ENCODE measurements at regions of chr20 and their contacts with region 1.

Region 1: DNA sequence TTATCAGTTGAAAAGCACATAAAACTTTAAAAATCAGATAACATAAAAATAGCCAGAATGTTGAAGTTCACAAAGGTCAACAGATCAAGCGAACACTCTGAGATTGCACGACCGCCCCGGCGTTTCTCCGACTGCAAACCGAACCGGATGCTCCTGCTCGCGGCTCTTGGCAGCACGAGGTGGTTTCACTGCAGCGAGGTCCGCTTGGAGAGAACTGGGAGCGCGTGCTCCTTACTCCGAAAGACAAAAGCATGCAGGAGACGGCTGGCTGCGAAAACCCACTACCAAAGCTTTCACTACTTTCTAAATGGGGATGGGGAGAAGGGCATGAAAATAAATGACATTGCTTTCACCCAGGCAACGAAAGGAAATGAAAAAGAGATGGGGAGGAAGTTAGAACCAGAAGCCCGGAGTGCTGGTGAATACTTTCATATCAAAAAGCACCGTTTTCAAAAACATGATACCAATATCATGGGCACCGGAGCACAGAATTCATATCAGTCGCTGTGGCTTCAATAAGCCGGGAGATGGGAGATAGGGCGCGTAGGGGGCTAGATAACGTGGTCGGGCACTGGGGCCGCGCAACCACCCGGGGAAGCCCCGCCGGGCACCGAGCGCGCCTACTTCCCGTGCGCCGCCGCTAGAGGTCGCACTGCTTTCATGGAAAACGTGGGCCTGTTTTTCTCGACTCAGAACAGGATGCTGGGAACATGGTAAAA is 8.3 kb upstream of the ANKRD60 start:
- DNase-seq: peak; percentile 93
- ATAC-seq: peak; percentile 90
- H3K4me3 Mint-ChIP-seq: peak overlapping the region; percentile 81
- H3K27ac Mint-ChIP-seq: peak overlapping the region; percentile 92
- H3K4me1 Mint-ChIP-seq: peaks cover 32% of the 10 kb centered on the region
- H3K27me3 Mint-ChIP-seq: no peaks in the 10 kb centered on the region

Region 2: GRCh38 chr20:58264274-58264673 is 27.5 kb after region 1 on chr20:
- CTCF ChIA-PET with region 1: no interaction called
- POLR2A ChIA-PET with region 1: no interaction called
- intact Hi-C with region 1: no loop called
- DNase-seq: no peak
- ATAC-seq: no peak
- H3K4me3 Mint-ChIP-seq: no peak overlapping the region
- H3K27ac Mint-ChIP-seq: no peak overlapping the region
- H3K4me1 Mint-ChIP-seq: peaks cover 22% of the 10 kb centered on the region
- H3K27me3 Mint-ChIP-seq: no peaks in the 10 kb centered on the region

Region 3: DNA sequence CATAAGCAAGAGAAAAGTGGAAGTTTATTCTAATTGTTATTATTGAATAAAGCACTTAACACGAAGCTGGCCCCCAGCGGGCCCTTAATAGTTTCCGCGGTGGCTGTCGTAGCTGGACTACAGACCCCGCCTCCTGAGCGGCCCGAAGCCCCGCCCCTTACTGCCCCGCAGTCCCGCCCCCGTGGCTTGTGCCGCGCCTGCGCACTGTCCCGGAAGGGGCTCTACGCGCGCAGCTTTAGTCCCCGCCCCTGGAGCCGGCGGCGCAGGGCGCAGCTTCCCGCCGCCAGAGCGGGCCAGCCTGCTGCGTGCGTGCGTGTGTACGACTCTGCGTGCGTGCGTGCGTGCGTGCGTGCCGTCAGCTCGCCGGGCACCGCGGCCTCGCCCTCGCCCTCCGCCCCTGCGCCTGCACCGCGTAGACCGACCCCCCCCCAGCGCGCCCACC is 152.1 kb after region 1 on chr20 and contains the start of gene VAPB:
- CTCF ChIA-PET with region 1: interaction called, 14 read pairs
- POLR2A ChIA-PET with region 1: no interaction called
- intact Hi-C with region 1: loop called (anchors 1 to 2 kb)
- DNase-seq: peak; percentile 98
- ATAC-seq: peak; percentile 99
- H3K4me3 Mint-ChIP-seq: peak within 1 kb of the TSS; percentile 100
- H3K27ac Mint-ChIP-seq: peak within 1 kb of the TSS; percentile 97
- H3K4me1 Mint-ChIP-seq: peaks cover 39% of the 10 kb centered on the region
- H3K27me3 Mint-ChIP-seq: peaks cover 2% of the 10 kb centered on the region
- total RNA-seq, gene VAPB: 43.9 to 54.5 TPM

Region 4: DNA sequence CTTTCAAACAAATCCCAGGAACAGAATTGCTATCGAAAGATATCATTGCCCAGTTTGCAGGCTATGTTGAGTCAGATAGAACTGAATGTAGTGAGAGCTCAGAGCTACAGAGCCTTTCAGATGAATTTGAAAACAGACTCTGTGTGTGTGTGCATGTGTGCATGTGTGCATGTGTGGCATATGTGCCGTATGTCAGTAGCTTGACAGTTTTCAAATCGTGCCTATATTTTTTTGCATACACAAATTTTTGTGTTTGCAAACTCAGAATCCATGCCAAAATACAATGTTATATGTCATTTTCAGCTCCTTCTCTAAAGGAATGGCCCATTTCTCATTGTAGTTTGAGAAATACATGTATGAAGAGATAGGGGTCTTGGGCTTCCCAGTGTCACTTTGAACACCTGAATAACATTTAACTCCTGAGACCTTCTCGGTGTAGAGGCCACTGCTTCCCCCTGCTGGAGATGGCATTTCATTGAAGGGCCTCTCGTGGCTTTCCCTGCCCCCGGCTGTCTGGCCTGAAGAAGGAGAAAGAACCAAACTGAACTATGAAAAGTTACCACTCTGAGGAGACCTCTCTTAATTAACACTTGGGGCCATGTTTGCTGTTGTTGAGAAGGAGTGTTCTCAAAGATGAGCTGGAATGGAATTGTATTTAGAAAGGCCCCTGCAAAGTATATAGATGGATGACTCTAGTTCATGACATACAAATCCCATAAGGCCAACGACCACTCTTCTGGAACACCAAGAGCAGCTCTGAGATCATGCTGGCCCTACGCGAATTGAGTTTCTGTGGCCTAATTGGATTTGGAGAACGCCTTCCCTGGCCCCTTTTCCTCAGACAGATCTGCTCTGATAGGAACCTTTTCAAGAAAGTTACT is 211.0 kb after region 1 on chr20:
- CTCF ChIA-PET with region 1: interaction called, 9 read pairs
- POLR2A ChIA-PET with region 1: no interaction called
- intact Hi-C with region 1: loop called (anchors 1 to 2 kb)
- DNase-seq: peak; percentile 77
- ATAC-seq: peak; percentile 83
- H3K4me3 Mint-ChIP-seq: no peak overlapping the region
- H3K27ac Mint-ChIP-seq: no peak overlapping the region
- H3K4me1 Mint-ChIP-seq: peaks cover 3% of the 10 kb centered on the region
- H3K27me3 Mint-ChIP-seq: no peaks in the 10 kb centered on the region

Region 5: DNA sequence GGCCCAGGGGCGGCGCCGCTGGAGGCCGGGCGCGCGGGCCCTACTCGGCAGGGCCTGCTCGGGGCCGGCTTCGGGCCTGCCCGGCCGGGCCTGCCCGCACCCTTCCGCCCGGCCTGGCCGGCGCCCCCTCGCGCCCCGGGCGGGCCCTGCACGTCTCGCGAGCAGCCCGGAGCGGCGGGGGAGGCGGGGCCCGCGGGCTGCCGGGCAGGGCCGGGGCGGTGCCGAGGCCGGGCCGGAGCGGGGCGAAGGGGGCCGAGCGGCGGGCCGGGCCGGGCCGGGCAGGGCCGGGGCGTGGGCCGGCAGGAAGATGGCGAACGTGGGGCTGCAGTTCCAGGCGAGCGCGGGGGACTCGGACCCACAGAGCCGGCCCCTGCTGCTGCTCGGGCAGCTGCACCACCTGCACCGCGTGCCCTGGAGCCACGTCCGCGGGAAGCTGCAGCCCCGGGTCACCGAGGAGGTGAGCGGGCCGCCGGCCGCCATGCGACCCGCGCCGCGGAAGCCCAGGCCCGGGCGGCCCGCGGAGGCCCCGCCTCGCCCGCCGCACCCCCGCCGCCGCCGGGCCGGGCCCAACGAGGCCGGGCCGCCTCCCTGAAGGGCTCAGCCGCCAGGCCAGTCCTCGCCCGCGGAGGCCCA is 455.9 kb after region 1 on chr20 and contains the start of gene NPEPL1:
- CTCF ChIA-PET with region 1: interaction called, 4 read pairs
- POLR2A ChIA-PET with region 1: no interaction called
- intact Hi-C with region 1: loop called in 1 of 2 experiments (anchors 1 kb)
- DNase-seq: peak; percentile 82
- ATAC-seq: peak; percentile 99
- H3K4me3 Mint-ChIP-seq: peak within 1 kb of the TSS; percentile 63
- H3K27ac Mint-ChIP-seq: peak within 1 kb of the TSS; percentile 53
- H3K4me1 Mint-ChIP-seq: peaks cover 13% of the 10 kb centered on the region
- H3K27me3 Mint-ChIP-seq: no peaks in the 10 kb centered on the region
- total RNA-seq, gene NPEPL1: 13.6 to 15.2 TPM

Region 6: GRCh38 chr20:58850693-58851174 is 614.0 kb after region 1 on chr20 and contains the start of gene GNAS-AS1:
- CTCF ChIA-PET with region 1: interaction called, 4 read pairs
- POLR2A ChIA-PET with region 1: no interaction called
- intact Hi-C with region 1: loop called (anchors 5 to 10 kb)
- DNase-seq: peak; percentile 91
- ATAC-seq: peak; percentile 91
- H3K4me3 Mint-ChIP-seq: peak within 1 kb of the TSS; percentile 77
- H3K27ac Mint-ChIP-seq: peak within 1 kb of the TSS; percentile 59
- H3K4me1 Mint-ChIP-seq: peaks cover 27% of the 10 kb centered on the region
- H3K27me3 Mint-ChIP-seq: peaks cover 41% of the 10 kb centered on the region
- total RNA-seq, gene GNAS-AS1: 1.1 to 1.9 TPM